ENCODE measurements at regions of chr10 and their contacts with region 1.

Region 1: GRCh38 chr10:5813287-5814109 is at the start of gene GDI2:
- DNase-seq: peak; percentile 98
- ATAC-seq: peak; percentile 94
- H3K4me3 Mint-ChIP-seq: peak within 1 kb of the TSS; percentile 95
- H3K27ac Mint-ChIP-seq: peak within 1 kb of the TSS; percentile 93
- H3K4me1 Mint-ChIP-seq: peaks cover 58% of the 10 kb centered on the region
- H3K27me3 Mint-ChIP-seq: no peaks in the 10 kb centered on the region
- CTCF ChIP-seq: no peak
- total RNA-seq, gene GDI2: 288 to 291 TPM

Region 2: DNA sequence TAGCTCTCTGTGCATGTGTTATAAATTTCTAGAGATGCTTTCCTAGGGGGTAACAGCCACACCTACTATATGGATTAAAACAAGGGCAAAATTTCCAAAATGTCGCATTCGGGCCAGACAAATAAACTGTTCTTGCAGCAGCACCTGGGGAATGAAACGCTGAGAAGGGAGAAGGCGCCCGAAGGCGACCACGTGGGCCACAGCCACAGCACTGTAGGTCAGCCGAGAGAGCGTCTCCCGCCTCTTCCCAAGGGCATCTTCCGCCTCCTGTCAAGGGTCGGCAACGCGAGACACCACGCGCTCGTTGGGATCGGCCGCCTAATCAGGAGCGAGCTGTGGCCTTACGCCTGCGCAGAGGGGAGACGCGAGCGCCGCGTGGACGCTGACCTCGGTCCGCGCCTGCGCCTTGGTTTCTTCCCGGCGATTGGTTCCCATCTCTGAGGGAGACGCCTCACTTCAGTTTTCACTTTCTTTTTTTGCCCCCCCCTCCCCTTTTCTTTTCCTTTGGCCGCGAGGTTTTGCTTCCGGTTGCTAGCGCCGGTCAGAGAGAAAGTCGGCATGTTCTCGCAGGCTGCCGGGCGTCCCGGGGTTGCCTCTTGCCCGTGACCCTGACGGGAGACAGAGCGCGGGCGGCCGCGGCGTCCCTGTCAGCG is 129.1 kb before region 1 on chr10 and contains the start of gene TASOR2:
- CTCF ChIA-PET with region 1: no interaction called
- POLR2A ChIA-PET with region 1: no interaction called
- intact Hi-C with region 1: loop called (anchors 10 kb)
- DNase-seq: peak; percentile 98
- ATAC-seq: peak; percentile 86
- H3K4me3 Mint-ChIP-seq: peak within 1 kb of the TSS; percentile 87
- H3K27ac Mint-ChIP-seq: peak within 1 kb of the TSS; percentile 94
- H3K4me1 Mint-ChIP-seq: peaks cover 44% of the 10 kb centered on the region
- H3K27me3 Mint-ChIP-seq: no peaks in the 10 kb centered on the region
- CTCF ChIP-seq: no peak
- total RNA-seq, gene TASOR2: 61.4 to 69.9 TPM

Region 3: GRCh38 chr10:5844345-5845048 is 31.0 kb after region 1 on chr10:
- CTCF ChIA-PET with region 1: interaction called, 3 read pairs
- POLR2A ChIA-PET with region 1: interaction called, 18 read pairs
- intact Hi-C with region 1: no loop called
- DNase-seq: no peak
- ATAC-seq: no peak
- H3K4me3 Mint-ChIP-seq: no peak overlapping the region
- H3K27ac Mint-ChIP-seq: peak overlapping the region; percentile 60
- H3K4me1 Mint-ChIP-seq: peaks cover 28% of the 10 kb centered on the region
- H3K27me3 Mint-ChIP-seq: peaks cover 2% of the 10 kb centered on the region
- CTCF ChIP-seq: no peak

Region 4: GRCh38 chr10:5873515-5873995 is 60.1 kb after region 1 on chr10:
- CTCF ChIA-PET with region 1: interaction called, 18 read pairs
- POLR2A ChIA-PET with region 1: interaction called, 4 read pairs
- intact Hi-C with region 1: loop called (anchors 5 kb)
- DNase-seq: peak; percentile 80
- ATAC-seq: peak; percentile 98
- H3K4me3 Mint-ChIP-seq: peak overlapping the region; percentile 6
- H3K27ac Mint-ChIP-seq: peak overlapping the region; percentile 21
- H3K4me1 Mint-ChIP-seq: peaks cover 6% of the 10 kb centered on the region
- H3K27me3 Mint-ChIP-seq: no peaks in the 10 kb centered on the region
- CTCF ChIP-seq: peak; percentile 73

Region 5: DNA sequence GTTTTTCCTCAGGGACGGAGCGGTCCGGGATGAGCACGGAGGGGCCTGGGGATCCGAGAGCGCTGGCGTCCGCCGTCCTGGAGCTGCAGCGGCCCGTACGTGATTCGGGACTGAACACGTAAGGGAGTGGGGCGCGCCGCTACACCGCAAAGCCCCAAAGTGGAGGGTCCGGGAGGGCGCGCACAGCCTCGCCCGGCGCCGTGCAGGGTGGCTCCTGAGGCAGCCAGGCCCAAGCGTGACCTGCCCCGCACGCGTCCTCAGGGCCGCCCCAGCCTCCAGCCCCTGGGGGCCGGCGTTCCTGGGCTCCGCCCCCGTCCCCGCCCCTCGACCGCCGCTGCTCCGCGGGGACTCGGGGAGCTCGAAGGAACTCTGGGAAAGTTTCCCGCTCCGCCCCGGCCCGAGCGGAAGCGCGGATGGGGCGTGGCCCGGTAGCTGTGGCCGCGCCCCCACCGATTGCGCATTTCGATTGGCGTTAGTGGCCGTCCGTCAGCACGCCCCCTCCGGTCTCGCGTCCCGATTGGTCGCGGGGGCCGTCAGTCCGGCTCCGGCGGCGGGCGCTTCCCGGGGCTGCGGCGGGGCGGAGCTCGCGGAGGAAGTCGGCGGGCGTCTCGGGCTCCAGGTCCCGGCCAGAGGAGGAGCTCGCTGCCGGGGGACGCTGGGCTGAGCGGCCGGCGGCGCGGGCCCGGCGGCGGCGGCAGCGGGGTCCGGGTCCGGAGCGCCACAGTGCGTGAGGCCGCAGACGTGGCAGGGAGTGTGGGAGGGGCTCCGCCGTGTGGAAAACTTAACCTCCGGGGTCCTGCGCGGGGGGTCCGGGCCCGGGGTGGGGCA is 76.3 kb after region 1 on chr10 and contains the starts of genes ANKRD16 and FBH1:
- CTCF ChIA-PET with region 1: interaction called, 4 read pairs
- POLR2A ChIA-PET with region 1: interaction called, 18 read pairs
- intact Hi-C with region 1: loop called (anchors 5 kb)
- DNase-seq: peak; percentile 97
- ATAC-seq: peak; percentile 91
- H3K4me3 Mint-ChIP-seq: peak within 1 kb of the TSS; percentile 92
- H3K27ac Mint-ChIP-seq: peak within 1 kb of the TSS; percentile 76
- H3K4me1 Mint-ChIP-seq: peaks cover 48% of the 10 kb centered on the region
- H3K27me3 Mint-ChIP-seq: no peaks in the 10 kb centered on the region
- CTCF ChIP-seq: no peak
- total RNA-seq, gene ANKRD16: 7.5 to 7.8 TPM
- total RNA-seq, gene FBH1: 47.2 to 51.3 TPM

Region 6: DNA sequence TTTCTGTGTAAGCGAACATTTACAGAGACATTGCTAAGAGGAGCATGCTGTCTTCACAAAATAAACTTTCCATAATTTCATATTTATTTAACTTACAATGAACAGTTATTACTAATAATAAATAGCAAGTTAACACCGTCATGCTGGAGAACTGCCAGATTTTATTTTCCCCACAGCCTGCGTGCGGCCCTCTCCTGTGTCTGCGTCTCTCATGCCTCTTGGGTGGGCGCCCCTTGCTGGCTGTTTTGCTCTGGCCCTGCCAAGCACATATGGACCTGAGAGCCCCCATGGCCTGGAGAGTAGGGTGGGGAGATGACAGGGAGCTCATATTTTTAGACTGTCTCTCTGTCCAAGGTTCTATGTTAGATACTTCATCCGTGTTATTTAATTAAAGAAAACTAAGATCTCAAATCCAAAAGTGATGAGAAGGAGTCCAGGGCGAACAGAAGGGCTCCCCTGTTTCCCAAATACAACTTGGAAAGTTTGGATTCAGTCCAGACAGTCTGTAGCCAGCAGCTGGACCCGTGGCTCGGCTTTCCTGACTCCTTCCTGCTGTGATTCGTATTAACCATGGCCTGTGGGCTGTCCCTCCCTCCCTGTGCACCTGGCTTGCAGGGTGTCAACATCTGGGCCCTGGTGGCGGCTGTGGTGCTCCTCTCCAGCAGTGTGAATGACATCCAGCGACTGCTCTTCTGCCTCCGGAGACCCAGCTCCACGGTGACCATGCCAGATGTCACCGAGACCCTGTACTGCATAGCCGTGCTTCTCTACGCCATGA is 97.0 kb after region 1 on chr10:
- CTCF ChIA-PET with region 1: no interaction called
- POLR2A ChIA-PET with region 1: no interaction called
- intact Hi-C with region 1: no loop called
- DNase-seq: no peak
- ATAC-seq: no peak
- H3K4me3 Mint-ChIP-seq: no peak overlapping the region
- H3K27ac Mint-ChIP-seq: no peak overlapping the region
- H3K4me1 Mint-ChIP-seq: peaks cover 6% of the 10 kb centered on the region
- H3K27me3 Mint-ChIP-seq: no peaks in the 10 kb centered on the region
- CTCF ChIP-seq: no peak

Region 7: DNA sequence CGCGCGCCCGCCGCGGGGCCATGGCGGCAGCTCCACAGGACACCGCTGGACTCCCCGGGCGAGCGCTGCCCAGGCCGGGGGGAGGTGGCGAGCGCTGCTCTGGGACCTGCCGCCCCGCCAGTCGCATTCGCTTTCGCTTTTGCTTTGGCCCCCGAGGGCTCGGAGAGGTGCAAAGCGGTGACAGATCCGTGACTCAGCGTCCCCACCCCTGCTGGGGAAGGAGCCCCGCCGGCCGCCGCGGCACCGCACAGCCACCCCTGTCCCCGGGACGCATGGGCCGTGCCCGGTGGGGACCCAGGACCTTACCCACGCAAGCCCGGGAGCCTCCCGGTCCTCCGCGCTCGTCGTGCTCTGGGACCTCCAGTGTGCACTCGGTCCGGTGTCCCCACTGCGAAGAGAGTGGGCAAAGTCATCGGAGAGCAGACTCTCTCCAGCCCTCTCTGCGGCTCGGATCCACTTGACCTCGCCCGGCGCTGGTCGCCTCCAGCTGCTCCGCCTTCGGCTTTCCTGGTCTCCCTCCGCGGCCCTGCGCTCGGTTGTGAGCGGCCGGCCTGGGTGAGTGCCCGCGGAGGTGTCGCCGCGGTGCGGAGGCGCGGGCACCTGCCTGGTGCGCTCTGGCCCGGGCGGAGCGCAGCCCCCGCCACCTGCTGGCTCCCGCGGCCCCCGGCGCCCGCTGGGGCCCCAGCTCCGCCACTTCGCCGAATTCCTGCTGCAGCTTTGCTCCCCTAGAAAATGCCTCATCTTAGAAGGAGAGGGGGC is 164.2 kb after region 1 on chr10 and contains the start of gene IL15RA:
- CTCF ChIA-PET with region 1: no interaction called
- POLR2A ChIA-PET with region 1: interaction called, 4 read pairs
- intact Hi-C with region 1: loop called (anchors 10 kb)
- DNase-seq: peak; percentile 94
- ATAC-seq: peak; percentile 73
- H3K4me3 Mint-ChIP-seq: peak within 1 kb of the TSS; percentile 95
- H3K27ac Mint-ChIP-seq: peak within 1 kb of the TSS; percentile 97
- H3K4me1 Mint-ChIP-seq: peaks cover 30% of the 10 kb centered on the region
- H3K27me3 Mint-ChIP-seq: peaks cover 7% of the 10 kb centered on the region
- CTCF ChIP-seq: peak; percentile 15
- total RNA-seq, gene IL15RA: 23.5 to 25.1 TPM

Measured in activated CD8-positive, alpha-beta T cell treated with anti-CD3 and anti-CD28 coated beads for 36 hours (primary cell).